Activated T-helper 2 cell treated with anti-CD3 and anti-CD28 coated beads, Interferon-gamma antibody, Interleukin-2, Interleukin-4, amounts not matched to agents 10 μg/mL and 5 μg/mL and 100 μg/mL, durations not matched to agents 14 hours and 24 hours and 36 hours (primary cell): ENCODE measurements at regions of chr13 and their contacts with region 1.

Region 1: DNA sequence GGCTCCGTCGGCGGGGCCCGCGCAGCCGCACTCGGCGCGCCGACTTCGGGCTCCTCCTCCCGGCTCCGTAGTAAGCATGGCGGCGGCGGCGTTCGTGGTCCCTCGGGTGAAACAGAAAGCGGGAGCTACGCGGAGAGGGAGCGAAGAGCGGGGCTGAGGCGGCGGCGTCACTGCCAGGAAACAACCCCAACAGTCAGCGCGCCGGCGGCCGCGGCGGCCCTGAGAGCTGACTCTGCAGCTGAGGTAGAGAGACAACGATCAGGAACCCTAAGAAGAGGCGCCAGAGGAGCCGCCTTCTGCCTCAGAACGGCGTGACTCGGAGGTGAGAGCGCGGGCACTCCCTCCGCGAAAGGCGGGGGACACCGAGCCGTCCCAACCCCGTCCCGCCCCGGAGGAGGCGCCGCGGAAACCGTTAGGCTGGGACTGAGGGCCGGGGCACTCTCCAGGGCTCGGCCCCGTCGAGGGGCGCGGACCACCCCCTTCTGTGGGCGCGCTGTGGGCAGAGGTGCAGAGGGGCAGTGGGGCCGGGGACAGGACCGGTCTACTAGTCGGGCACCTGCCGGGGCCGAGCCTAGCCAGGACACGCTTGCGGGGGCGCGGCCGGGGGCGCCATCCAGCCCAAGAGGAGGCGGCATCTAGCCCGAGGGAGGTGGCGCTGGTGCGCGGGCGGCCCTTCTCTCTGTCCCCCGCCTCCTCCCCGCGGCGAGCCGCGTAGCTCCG is at the start of gene FNDC3A:
- DNase-seq: peak; percentile 87
- H3K4me3 Mint-ChIP-seq: peak within 1 kb of the TSS; percentile 96
- H3K27ac Mint-ChIP-seq: peak within 1 kb of the TSS; percentile 98
- H3K4me1 Mint-ChIP-seq: peaks cover 34% of the 10 kb centered on the region
- H3K27me3 Mint-ChIP-seq: no peaks in the 10 kb centered on the region
- total RNA-seq, gene FNDC3A: 21.0 and 21.7 TPM in 2 replicates

Region 2: GRCh38 chr13:48094781-48095502 is 881.1 kb before region 1 on chr13 and contains the start of gene MED4:
- intact Hi-C with region 1: loop called (anchors 5 kb)
- DNase-seq: peak; percentile 96
- H3K4me3 Mint-ChIP-seq: peak within 1 kb of the TSS; percentile 99
- H3K27ac Mint-ChIP-seq: peak within 1 kb of the TSS; percentile 95
- H3K4me1 Mint-ChIP-seq: peaks cover 26% of the 10 kb centered on the region
- H3K27me3 Mint-ChIP-seq: peaks cover 8% of the 10 kb centered on the region
- total RNA-seq, gene MED4: 56.1 and 56.3 TPM in 2 replicates

Region 3: GRCh38 chr13:48532506-48533499 is 443.2 kb before region 1 on chr13 and contains the start of gene RCBTB2:
- intact Hi-C with region 1: loop called (anchors 1 kb)
- DNase-seq: peak; percentile 99
- H3K4me3 Mint-ChIP-seq: peak within 1 kb of the TSS; percentile 90
- H3K27ac Mint-ChIP-seq: peak within 1 kb of the TSS; percentile 89
- H3K4me1 Mint-ChIP-seq: peaks cover 28% of the 10 kb centered on the region
- H3K27me3 Mint-ChIP-seq: peaks cover 2% of the 10 kb centered on the region
- total RNA-seq, gene RCBTB2: 2.7 and 3.4 TPM in 2 replicates

Region 4: GRCh38 chr13:48804821-48805601 is 171.0 kb before region 1 on chr13:
- intact Hi-C with region 1: loop called (anchors 1 kb)
- DNase-seq: no peak
- H3K4me3 Mint-ChIP-seq: peak overlapping the region; percentile 15
- H3K27ac Mint-ChIP-seq: peak overlapping the region; percentile 63
- H3K4me1 Mint-ChIP-seq: peaks cover 25% of the 10 kb centered on the region
- H3K27me3 Mint-ChIP-seq: peaks cover 14% of the 10 kb centered on the region

Region 5: DNA sequence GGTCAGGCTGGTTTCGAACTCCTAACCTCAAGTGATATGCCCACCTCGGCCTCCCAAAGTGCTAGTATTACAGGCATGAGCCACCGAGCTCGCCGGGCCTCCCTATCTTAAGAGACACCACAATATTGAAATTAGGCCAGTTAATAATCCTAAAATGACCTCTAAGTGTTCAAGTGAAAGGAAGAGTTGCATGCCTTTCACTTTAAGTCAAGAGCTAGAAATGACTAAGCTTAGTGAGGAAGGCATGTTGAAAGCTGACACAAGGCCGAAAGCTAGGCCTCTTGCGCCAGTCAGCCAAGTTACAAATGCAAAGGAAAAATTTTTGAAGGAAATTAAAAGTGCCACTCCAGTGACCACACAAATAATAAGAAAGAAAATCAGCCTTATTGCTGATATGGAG is 144.8 kb before region 1 on chr13:
- intact Hi-C with region 1: no loop called
- DNase-seq: no peak
- H3K4me3 Mint-ChIP-seq: no peak overlapping the region
- H3K27ac Mint-ChIP-seq: no peak overlapping the region
- H3K4me1 Mint-ChIP-seq: peaks cover 14% of the 10 kb centered on the region
- H3K27me3 Mint-ChIP-seq: peaks cover 6% of the 10 kb centered on the region

Region 6: GRCh38 chr13:49110122-49110912 is 134.3 kb after region 1 on chr13:
- intact Hi-C with region 1: loop called (anchors 1 kb)
- DNase-seq: peak; percentile 68
- H3K4me3 Mint-ChIP-seq: peak overlapping the region; percentile 85
- H3K27ac Mint-ChIP-seq: peak overlapping the region; percentile 77
- H3K4me1 Mint-ChIP-seq: peaks cover 16% of the 10 kb centered on the region
- H3K27me3 Mint-ChIP-seq: no peaks in the 10 kb centered on the region